AG04450 (cell line): ENCODE measurements at regions of chr3 and their contacts with region 1.

Region 1: GRCh38 chr3:185188816-185189215 is 36.0 kb upstream of the C3orf70 start:
- DNase-seq: no peak
- H3K4me3 ChIP-seq: no peak overlapping the region
- H3K27ac ChIP-seq: no peak overlapping the region
- H3K27me3 ChIP-seq: no peaks in the 10 kb centered on the region
- CTCF ChIP-seq: no peak

Region 2: DNA sequence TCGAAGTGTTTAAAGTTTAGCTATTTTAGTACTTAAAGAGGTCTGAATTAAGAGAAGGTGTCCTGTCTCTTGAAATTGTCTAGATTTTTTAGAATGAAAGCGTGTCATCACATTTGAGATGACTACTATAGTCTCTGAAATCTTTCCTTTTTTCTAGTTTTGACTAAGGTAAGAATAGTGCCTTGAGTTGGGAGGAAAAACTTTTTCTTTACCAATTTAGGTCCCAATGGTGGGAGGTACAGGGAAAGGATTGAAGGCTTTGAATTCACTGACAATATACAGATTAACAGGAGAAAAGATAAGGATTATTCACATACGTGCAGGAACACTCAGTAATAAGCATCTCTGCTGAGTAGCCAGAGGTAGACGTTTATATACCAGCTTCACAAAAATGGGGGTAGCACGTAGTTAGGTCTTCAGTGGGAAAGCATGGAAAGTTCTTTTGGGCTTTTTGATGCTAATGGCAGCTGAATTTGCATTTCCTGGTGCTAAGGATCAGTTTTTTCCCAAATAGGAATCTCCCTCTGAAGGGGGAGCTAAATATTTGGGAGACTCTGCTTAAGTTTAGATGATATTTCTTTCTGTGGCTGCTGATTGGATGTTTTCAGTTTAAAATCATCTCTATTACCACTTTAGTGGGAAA is 288.7 kb before region 1 on chr3:
- CTCF ChIA-PET with region 1: no interaction called
- POLR2A ChIA-PET with region 1: no interaction called
- DNase-seq: no peak
- H3K4me3 ChIP-seq: no peak overlapping the region
- H3K27ac ChIP-seq: no peak overlapping the region
- H3K27me3 ChIP-seq: no peaks in the 10 kb centered on the region
- CTCF ChIP-seq: no peak

Region 3: GRCh38 chr3:185131602-185132256 is 57.1 kb before region 1 on chr3:
- CTCF ChIA-PET with region 1: no interaction called
- POLR2A ChIA-PET with region 1: no interaction called
- DNase-seq: no peak
- H3K4me3 ChIP-seq: no peak overlapping the region
- H3K27ac ChIP-seq: no peak overlapping the region
- H3K27me3 ChIP-seq: peaks cover 2% of the 10 kb centered on the region
- CTCF ChIP-seq: no peak

Region 4: DNA sequence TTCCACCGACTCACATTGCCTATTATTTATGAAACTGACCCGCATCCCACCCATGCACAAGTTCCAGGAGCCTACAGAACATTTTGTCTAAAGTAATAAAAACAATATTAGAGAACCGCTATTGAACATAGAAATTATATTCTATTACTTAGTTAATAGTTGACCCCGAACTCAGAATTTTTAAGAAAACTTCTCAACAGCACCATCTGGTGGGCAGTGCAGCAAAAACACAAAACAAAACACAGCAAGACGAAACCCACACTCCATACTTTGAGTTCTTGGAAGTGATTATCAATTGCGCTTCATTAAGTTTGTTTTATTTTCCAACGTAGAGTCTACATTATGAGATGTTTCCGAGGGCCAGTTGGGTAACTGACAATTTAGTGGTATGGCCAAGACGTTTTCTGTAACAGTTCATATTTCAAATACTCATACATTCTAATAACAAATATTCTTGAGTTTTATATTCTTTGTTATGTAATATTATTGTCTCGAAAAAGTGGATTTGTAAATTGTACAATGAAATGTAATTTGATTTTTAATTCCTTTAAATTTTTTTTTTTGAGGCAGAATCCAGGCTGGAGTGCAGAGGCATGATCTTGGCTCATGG is 12.0 kb before region 1 on chr3:
- CTCF ChIA-PET with region 1: interaction called, 10 read pairs
- POLR2A ChIA-PET with region 1: no interaction called
- DNase-seq: no peak
- H3K4me3 ChIP-seq: no peak overlapping the region
- H3K27ac ChIP-seq: no peak overlapping the region
- H3K27me3 ChIP-seq: peaks cover 9% of the 10 kb centered on the region
- CTCF ChIP-seq: peak; percentile 67

Region 5: DNA sequence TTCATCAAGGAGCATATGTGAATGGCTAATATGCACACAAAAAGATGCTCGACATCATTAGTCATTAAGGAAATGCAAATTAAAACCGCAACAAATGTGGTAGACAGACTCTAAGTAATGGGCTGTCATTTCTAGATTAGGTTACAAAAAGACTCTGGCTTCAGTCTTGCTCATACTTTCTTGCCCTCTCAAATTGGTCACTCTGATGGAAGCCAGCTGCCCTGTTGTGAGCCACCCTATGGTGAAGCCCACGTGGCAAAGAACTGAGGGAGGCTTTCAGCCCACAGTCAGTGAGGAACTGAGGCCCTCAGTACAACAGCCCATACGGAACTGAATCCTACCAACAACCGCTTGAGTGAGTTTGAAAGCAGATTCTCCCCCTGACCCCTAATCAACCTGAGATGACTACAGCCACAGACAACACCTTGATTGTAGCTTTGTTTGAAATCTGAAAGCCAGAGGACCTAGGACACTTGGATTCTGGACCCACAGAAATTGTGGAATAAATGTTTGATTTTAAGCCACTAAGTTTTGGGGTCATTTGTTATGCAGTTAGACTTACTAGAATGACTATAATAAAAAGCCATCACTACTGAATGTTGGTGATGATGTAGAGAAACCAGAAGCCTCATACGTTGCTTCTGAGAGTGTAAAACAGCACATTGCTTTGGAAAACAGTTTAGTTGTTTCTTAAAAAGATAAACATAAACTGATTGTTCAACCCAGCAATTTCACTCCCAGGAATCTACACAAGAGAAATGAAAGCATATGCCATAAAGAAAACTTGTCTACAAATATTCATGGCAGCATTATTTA is 19.3 kb after region 1 on chr3:
- CTCF ChIA-PET with region 1: no interaction called
- POLR2A ChIA-PET with region 1: no interaction called
- DNase-seq: no peak
- H3K4me3 ChIP-seq: no peak overlapping the region
- H3K27ac ChIP-seq: no peak overlapping the region
- H3K27me3 ChIP-seq: no peaks in the 10 kb centered on the region
- CTCF ChIP-seq: no peak